ENCODE measurements at regions of chr9 and their contacts with region 1.

Region 1: DNA sequence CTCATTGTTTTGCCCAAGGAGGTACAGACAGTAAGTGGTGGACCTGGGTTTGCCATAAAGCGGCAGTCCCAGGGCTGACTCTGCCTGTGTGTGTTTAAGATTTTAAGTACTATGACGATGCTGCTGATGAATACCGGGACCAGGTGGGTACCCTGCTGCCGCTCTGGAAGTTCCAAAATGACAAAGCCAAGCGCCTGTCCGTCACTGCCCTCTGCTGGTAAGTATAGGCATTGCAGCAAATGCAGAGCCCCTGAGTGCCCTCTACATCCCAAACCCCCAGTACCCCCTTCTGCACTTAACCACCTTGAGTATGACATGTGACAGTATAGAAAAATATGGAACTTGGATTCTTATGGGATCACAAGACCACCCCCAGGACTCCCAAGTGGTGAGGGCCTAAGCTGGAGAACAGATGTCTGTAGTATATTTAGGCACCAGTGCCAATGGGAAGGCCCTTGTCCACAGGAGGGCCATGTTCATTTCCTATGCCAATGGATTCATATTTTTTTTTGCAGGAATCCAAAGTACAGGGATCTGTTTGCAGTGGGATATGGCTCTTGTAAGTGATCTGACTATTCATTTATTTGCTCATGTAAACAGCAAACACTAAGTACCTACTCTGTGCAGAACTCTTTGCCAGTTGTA is 22.0 kb downstream of the ENHO start:
- DNase-seq: no peak

Region 2: GRCh38 chr9:34332076-34332964 is 168.4 kb before region 1 on chr9:
- intact Hi-C with region 1: loop called (anchors 10 kb)
- DNase-seq: no peak

Region 3: DNA sequence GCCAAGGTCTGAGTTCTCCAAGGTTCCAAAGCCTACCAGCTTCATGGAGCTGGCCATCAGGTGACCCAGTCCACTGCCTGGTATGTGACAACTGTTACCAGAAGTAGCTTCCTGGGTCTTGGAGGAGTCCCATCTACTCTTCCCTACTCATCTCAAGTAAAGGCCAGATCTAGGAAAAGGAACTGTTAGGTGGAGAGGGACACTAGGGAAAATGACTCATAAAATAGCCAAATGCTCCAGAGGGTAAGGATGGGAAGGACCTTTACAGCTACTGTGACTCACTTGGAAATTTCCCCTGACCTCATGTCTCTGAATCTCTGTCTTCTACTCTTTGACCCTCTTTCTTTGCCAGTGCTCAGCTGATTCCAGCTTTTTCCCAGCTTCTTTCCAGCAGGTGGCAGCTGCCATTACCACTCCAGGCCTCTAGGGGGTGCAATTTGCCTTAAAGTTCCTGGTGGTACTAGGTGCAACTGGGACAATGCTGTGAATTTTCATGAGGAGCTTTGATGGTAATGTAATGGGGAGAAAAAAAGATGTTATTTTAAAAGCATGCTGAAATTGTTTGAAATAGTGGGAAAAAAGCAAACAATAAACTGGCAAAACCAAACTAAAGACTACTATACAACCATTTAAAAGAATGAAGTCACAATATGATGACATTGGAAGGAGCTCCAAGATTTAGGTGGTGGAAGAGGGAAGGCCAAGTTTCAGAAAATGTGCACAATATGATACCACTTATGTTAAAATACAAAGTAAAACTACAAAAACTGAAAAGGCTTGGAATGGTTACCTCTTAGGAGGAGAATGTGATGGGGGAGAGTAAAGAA is 97.0 kb before region 1 on chr9:
- intact Hi-C with region 1: loop called (anchors 2 kb)
- DNase-seq: peak; percentile 82

Region 4: GRCh38 chr9:34437006-34437925 is 63.5 kb before region 1 on chr9:
- intact Hi-C with region 1: loop called (anchors 1 kb)
- DNase-seq: no peak

Region 5: DNA sequence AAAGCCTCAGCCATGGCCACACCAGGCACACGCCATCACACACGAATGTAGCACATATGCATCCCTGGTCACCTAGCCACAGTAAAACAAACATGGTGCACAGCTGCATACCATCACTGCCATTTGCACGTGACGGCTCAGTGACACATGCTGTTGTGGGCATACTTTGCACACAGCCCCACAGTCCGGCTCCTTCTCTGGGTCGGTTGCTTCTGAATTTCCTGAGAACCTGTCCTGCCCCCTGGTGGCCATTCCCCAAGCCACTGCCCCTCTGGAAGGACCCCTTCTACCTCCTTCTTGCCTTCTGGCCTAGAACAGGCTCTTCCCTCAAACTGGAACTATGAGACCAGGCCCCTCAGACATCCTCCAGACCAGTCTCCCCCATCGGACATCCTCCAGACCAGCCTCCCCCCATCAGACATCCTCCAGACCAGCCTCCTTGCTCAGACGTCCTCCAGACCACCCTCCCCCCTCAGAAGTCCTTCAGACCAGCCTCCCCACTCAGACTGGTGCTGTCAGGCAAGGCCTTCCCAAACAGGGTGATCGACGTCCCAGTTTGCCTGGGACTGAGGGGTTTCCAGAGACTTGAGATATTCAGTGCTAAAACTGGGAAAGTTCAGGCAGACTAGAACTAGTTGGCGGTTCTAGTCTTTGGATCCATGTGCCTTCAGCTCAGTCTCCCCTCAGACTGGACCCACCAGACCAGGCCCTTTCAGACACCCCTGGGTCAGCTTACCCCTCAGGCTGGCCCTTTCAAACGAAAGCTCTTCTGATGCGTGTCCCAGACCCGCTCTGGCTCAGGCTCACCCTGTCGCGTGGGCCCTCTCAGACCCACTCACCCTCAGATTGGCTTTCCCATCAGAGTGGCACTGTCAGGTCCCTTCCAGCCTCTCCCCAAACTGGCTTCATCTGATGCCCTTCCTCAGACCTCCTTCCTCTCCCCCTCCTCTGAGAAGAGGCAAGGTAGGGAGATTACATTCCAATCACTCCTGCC is 46.4 kb after region 1 on chr9:
- intact Hi-C with region 1: loop called (anchors 2 kb)
- DNase-seq: no peak

Region 6: GRCh38 chr9:34591248-34591916 is 90.6 kb after region 1 on chr9:
- intact Hi-C with region 1: loop called (anchors 5 kb)
- DNase-seq: peak; percentile 94

Region 7: DNA sequence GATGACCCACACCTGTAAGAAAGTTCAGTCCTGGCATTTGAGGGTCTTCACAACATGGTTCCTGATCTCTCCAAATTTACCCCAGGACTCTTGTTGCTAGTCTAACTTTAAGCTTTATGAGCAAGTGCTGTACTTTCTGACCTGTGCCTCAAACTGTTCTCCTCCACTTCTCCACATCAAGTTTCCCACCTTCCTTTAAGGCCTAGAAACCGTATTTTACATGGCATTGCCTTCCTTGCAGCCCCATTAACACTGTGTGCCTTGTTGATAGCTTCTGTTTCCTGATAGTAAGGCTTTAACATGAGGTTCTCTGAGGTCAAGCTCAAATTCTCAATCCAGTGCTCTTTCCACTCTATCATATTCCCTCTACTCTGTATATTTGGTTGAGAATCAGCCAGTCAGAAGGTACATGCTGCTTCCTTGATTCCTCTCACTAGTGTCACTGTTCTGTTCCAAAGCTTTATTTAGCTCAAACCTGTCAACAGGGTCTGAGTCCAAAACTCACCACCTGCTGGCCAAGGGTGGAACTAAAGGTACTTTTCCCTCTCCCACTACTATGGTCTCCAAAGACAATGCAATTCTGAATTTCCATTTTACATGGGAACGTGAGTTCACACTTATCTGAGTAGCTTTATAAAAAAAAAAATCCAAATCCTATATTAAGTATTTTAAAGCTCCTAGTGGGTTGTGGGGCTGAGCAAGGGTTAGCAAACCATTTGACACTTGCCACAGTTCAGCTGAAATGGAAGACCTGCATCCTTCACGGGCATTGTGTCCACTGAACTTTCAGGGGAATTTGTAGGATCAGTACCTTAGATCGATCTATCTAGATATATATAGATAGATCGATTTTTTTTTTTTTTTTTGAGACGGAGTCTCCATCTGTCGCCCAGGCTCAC is 550.6 kb after region 1 on chr9:
- intact Hi-C with region 1: no loop called
- DNase-seq: no peak

Region 8: GRCh38 chr9:35193762-35194161 is 693.0 kb after region 1 on chr9:
- intact Hi-C with region 1: no loop called
- DNase-seq: no peak